B cell (primary cell): ENCODE measurements at regions of chr4 and their contacts with region 1.

Region 1: GRCh38 chr4:25913851-25914669 is at the start of gene SMIM20:
- DNase-seq: peak; percentile 95
- ATAC-seq: peak; percentile 94
- H3K4me3 ChIP-seq: peak within 1 kb of the TSS; percentile 89 to 95 (median 93)
- H3K4me3 Mint-ChIP-seq: peak within 1 kb of the TSS; percentile 95
- H3K27ac ChIP-seq: peak within 1 kb of the TSS; percentile 92 to 93
- H3K27ac Mint-ChIP-seq: peak within 1 kb of the TSS; percentile 97
- H3K4me1 ChIP-seq: peaks cover 27 to 35% of the 10 kb centered on the region in 2 donors
- H3K4me1 Mint-ChIP-seq: peaks cover 34% of the 10 kb centered on the region
- H3K27me3 ChIP-seq: no peaks in the 10 kb centered on the region
- H3K27me3 Mint-ChIP-seq: no peaks in the 10 kb centered on the region
- CTCF ChIP-seq: no peak
- total RNA-seq, gene SMIM20: 14.3 and 20.2 TPM in 2 replicates

Region 2: GRCh38 chr4:25376754-25377571 is 537.1 kb before region 1 on chr4 and contains the start of gene ANAPC4:
- CTCF ChIA-PET with region 1: no interaction called
- POLR2A ChIA-PET with region 1: no interaction called
- intact Hi-C with region 1: loop called (anchors 1 kb)
- DNase-seq: peak; percentile 96
- ATAC-seq: peak; percentile 96
- H3K4me3 ChIP-seq: peak within 1 kb of the TSS; percentile 76 to 92 (median 86)
- H3K4me3 Mint-ChIP-seq: no peak within 1 kb of the TSS
- H3K27ac ChIP-seq: peak within 1 kb of the TSS; percentile 28 to 64
- H3K27ac Mint-ChIP-seq: peak within 1 kb of the TSS; percentile 82
- H3K4me1 ChIP-seq: peaks cover 15 to 23% of the 10 kb centered on the region in 2 donors
- H3K4me1 Mint-ChIP-seq: peaks cover 9% of the 10 kb centered on the region
- H3K27me3 ChIP-seq: no peaks in the 10 kb centered on the region
- H3K27me3 Mint-ChIP-seq: no peaks in the 10 kb centered on the region
- CTCF ChIP-seq: peak; percentile 9
- total RNA-seq, gene ANAPC4: 52.6 and 62.5 TPM in 2 replicates

Region 3: GRCh38 chr4:25879991-25880651 is 33.9 kb before region 1 on chr4:
- CTCF ChIA-PET with region 1: interaction called, 7 read pairs
- POLR2A ChIA-PET with region 1: interaction called, 16 read pairs
- intact Hi-C with region 1: loop called (anchors 1 kb)
- DNase-seq: peak; percentile 68
- ATAC-seq: peak; percentile 48
- H3K4me3 ChIP-seq: no peak overlapping the region
- H3K4me3 Mint-ChIP-seq: peak overlapping the region; percentile 82
- H3K27ac ChIP-seq: peak overlapping the region; percentile 70 to 71
- H3K27ac Mint-ChIP-seq: peak overlapping the region; percentile 97
- H3K4me1 ChIP-seq: peaks cover 70 to 76% of the 10 kb centered on the region in 2 donors
- H3K4me1 Mint-ChIP-seq: peaks cover 80% of the 10 kb centered on the region
- H3K27me3 ChIP-seq: no peaks in the 10 kb centered on the region
- H3K27me3 Mint-ChIP-seq: no peaks in the 10 kb centered on the region
- CTCF ChIP-seq: no peak

Region 4: GRCh38 chr4:26076000-26076587 is 162.0 kb after region 1 on chr4:
- CTCF ChIA-PET with region 1: no interaction called
- POLR2A ChIA-PET with region 1: no interaction called
- intact Hi-C with region 1: loop called (anchors 10 kb)
- DNase-seq: peak; percentile 38
- ATAC-seq: peak; percentile 23
- H3K4me3 ChIP-seq: no peak overlapping the region
- H3K4me3 Mint-ChIP-seq: peak overlapping the region; percentile 23
- H3K27ac ChIP-seq: peak overlapping the region; percentile 32 to 44
- H3K27ac Mint-ChIP-seq: peak overlapping the region; percentile 75
- H3K4me1 ChIP-seq: peaks cover 20 to 25% of the 10 kb centered on the region in 2 donors
- H3K4me1 Mint-ChIP-seq: peaks cover 29% of the 10 kb centered on the region
- H3K27me3 ChIP-seq: peaks cover 0 to 2% (median 0%) of the 10 kb centered on the region in 4 experiments
- H3K27me3 Mint-ChIP-seq: peaks cover 5% of the 10 kb centered on the region
- CTCF ChIP-seq: no peak

Region 5: GRCh38 chr4:26319467-26319948 is 405.4 kb after region 1 on chr4:
- CTCF ChIA-PET with region 1: interaction called, 3 read pairs
- POLR2A ChIA-PET with region 1: interaction called, 7 read pairs
- intact Hi-C with region 1: loop called (anchors 1 kb)
- DNase-seq: peak; percentile 97
- ATAC-seq: peak; percentile 73
- H3K4me3 ChIP-seq: peak overlapping the region; percentile 75 to 91 (median 87)
- H3K4me3 Mint-ChIP-seq: peak overlapping the region; percentile 99
- H3K27ac ChIP-seq: peak overlapping the region; percentile 78 to 89
- H3K27ac Mint-ChIP-seq: peak overlapping the region; percentile 99
- H3K4me1 ChIP-seq: peaks cover 13 to 22% of the 10 kb centered on the region in 2 donors
- H3K4me1 Mint-ChIP-seq: peaks cover 27% of the 10 kb centered on the region
- H3K27me3 ChIP-seq: no peaks in the 10 kb centered on the region
- H3K27me3 Mint-ChIP-seq: no peaks in the 10 kb centered on the region
- CTCF ChIP-seq: no peak